Vagina (tissue), 2 donors: ENCODE measurements at regions of chr17 and their contacts with region 1.

Region 1: DNA sequence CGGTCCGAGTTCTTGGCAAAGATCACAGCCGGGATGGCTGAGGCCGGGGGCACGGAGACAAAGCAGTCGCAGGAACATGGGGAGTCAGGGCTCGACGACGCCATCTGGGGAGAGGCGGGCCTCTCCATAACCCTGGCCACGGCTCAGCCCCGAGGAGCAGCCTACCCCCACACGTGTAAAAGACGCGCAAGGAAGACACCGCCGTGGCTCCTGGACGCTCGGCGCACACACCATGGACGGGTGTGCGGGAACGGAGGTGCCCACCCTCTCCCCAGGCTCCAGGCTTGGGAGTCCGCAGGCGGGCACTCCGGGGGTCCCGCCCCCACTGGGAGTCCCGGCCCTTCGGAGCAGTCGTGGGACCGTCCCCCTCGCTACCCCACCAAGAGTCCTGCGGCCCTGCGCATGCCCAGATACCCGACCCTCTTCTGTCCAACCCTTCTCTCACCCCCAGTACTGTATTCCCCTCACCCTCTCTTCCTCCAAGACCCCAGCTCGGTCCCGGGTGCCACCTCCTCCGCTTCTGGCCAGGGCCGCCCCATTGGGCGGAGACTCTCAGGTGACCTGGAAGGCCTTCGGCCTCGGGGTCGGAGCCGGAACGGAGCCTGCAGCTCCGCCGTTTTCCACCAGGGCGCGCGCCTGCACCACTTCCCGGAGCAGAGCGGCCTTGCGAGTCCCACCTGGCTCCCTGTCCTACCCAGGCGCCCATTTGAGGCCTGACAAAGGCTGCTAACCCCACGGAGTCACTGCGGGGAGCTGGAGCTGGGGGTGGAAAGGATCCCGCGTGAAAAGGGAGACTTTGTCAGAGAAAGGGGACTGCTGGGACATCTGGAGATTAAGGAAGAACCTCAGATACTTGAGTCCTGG is at the start of gene SCRN2:
- DNase-seq: peak in 1 of 2 donors; percentile 94
- H3K4me3 ChIP-seq: peak within 1 kb of the TSS; percentile 76 to 83
- H3K27ac ChIP-seq: peak within 1 kb of the TSS; percentile 77
- H3K4me1 ChIP-seq: peaks cover 29% of the 10 kb centered on the region
- H3K27me3 ChIP-seq: no peaks in the 10 kb centered on the region
- CTCF ChIP-seq: peak; percentile 94 to 99 (median 99)
- POLR2A ChIP-seq: no peak
- total RNA-seq, gene SCRN2: 33.1 TPM

Region 2: DNA sequence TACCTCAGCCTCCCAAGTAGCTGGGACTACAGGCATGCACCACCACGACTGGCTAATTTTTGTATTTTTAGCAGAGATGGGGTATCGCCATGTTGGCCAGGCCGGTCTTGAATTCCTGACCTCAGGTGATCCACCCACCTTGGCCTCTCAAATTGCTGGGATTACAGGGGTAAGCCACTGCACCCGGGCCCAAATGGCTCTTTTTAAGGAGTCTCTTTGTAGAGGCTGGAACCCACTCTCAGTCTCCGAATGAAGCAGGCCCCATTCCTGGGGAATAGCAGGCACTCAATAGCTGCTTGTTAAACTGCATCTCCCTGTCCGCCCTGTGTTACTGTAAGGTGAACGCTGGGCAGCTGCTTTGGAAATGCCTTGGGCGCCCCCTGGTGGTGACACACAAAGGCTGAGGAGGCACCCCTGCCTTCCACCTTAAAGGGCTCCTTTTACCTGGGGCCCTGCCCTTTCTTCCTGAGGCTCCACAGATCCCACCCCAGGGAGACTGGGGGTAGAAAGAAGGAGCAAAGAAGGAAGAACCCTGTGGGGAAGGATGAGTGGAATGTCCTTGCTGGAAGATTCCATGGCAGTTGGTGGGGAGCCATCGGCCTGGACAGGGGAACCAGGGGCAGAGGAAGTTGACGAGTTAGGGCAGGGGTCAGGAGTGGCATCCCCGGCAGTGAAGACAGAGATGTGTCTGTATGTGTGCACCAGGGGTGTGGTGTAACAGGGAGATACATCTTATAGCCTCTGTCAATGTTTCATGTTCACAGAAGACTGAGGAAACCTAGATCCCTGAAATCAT is 49.0 kb after region 1 on chr17:
- intact Hi-C with region 1: loop called (anchors 2 kb)
- DNase-seq: no peak
- H3K4me3 ChIP-seq: no peak overlapping the region
- H3K27ac ChIP-seq: no peak overlapping the region
- H3K4me1 ChIP-seq: peaks cover 21% of the 10 kb centered on the region
- H3K27me3 ChIP-seq: no peaks in the 10 kb centered on the region
- CTCF ChIP-seq: peak; percentile 92 to 98 (median 93)
- POLR2A ChIP-seq: no peak